ENCODE measurements at regions of chr2 and their contacts with region 1.

Region 1: GRCh38 chr2:216519154-216519762 is 20.6 kb downstream of the RPL37A start:
- DNase-seq: no peak
- ATAC-seq: peak; percentile 83

Region 2: GRCh38 chr2:216555274-216555673 is 36.0 kb after region 1 on chr2:
- intact Hi-C with region 1: no loop called
- DNase-seq: peak; percentile 74
- ATAC-seq: peak; percentile 82

Region 3: DNA sequence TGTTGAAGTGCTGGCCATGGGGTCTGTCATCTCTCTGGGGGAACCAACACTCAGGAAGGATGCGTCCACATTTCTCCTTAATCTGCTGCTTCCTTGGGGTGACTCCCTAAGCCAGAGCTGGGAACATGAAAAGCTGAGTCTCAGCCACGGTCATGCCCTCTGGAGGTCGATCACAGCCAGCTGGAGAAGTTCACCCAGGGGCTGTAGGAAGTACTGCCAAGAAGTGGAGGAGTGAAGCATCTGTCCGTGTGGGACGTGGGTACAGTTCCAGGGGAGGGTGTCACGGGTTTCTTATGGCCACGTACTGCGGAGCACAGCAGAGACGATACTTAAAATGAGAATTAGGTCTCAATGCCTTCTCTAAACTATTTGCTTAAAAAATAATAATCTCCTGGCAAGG is 71.5 kb after region 1 on chr2:
- intact Hi-C with region 1: loop called (anchors 5 kb)
- DNase-seq: no peak
- ATAC-seq: peak; percentile 89

Region 4: GRCh38 chr2:216666461-216667233 is 147.4 kb after region 1 on chr2:
- intact Hi-C with region 1: loop called (anchors 1 kb)
- DNase-seq: peak; percentile 74
- ATAC-seq: peak; percentile 66

Region 5: DNA sequence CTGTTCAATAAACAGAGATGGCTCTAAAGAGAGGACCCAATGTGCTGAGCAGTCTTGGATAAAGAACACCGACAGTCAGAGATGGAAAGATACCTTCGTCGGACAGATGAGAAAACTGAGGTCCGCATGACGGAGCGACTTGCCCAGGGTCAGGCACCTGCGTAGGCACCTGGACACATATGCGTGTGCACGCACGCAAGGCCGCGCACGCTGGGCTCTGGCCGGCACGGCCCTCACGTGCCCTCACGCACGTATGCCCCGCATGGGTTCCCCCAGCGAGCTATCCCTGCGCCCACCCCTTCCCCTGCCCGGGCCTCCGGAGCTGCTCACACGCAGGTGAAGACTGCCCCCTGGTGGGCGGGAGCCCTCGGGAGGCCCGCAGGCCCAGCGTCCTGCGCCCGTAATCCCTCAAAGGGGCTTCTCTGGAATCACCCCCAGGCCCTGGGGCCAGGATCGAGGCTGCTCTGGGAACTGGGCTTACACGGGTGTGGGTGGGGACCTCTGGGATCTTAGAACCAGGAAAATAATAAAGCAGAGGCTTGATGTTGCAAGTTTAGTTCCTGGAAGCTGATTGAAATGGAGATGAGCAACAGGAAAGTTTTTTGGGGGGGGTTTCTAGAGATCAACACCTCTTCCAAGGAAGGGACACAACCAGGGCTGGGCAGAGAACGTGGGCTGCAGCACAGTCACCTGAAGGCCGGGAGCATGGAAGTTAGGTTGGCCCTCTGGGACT is 1237.3 kb after region 1 on chr2:
- intact Hi-C with region 1: loop called (anchors 10 kb)
- DNase-seq: peak; percentile 82
- ATAC-seq: peak; percentile 76

Region 6: GRCh38 chr2:217798743-217799562 is 1279.7 kb after region 1 on chr2:
- intact Hi-C with region 1: no loop called
- DNase-seq: no peak
- ATAC-seq: peak; percentile 8